ENCODE measurements at regions of chr15 and their contacts with region 1.

Region 1: DNA sequence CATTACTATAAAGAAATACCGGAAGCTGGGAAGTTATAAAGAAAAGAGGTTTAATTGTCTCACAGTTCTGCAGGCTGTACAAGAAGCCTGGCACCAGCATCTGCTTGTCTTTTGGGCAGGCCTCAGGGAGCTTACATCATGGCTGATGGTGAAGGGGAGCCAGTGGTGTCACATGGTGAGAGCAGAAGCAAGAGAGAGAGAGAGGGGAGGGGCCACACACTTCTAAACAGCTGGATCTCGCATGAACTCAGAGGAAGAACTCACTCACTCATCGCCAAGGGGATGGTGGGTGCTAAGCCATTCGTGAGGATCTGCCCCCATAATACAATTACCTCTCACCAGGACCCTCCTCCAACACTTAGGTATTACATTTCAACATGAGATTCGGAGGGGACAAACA is 51.8 kb upstream of the ANKRD34C start:
- DNase-seq: no peak
- ATAC-seq: no peak
- H3K4me3 ChIP-seq: no peak overlapping the region
- H3K27ac ChIP-seq: no peak overlapping the region
- H3K4me1 ChIP-seq: peaks cover 0 to 10% (median 0%) of the 10 kb centered on the region in 12 donors
- H3K27me3 ChIP-seq: no peaks in the 10 kb centered on the region
- CTCF ChIP-seq: no peak
- POLR2A ChIP-seq: no peak

Region 2: GRCh38 chr15:79184465-79184892 is 46.3 kb before region 1 on chr15:
- intact Hi-C with region 1: no loop called
- DNase-seq: peak; percentile 57 to 81 (median 70)
- ATAC-seq: peak in 3 of 4 donors; percentile 42 to 65 (median 50)
- H3K4me3 ChIP-seq: no peak overlapping the region
- H3K27ac ChIP-seq: no peak overlapping the region
- H3K4me1 ChIP-seq: no peaks in the 10 kb centered on the region
- H3K27me3 ChIP-seq: no peaks in the 10 kb centered on the region
- CTCF ChIP-seq: peak; percentile 89 to 99 (median 96)
- POLR2A ChIP-seq: no peak

Region 3: DNA sequence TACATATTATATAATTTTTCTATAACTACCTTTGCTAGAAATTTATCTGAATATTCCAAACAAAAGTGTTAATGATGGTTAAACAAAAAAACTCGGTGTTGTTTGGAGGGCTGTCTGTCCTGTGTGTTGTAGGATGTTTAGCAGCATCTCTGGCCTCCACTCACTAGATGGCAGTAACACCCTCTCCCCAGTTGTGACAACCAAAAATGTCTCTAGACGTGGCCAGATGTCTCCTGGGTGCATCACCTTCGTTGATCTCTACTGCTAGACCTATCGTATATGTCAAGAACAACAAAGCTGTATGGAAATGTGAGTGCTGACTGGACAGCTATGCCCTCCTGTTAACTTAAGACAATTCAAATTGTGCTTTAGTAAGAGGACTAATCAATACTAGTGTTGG is 65.8 kb after region 1 on chr15:
- intact Hi-C with region 1: loop called in 1 of 10 experiments (anchors 10 kb)
- DNase-seq: no peak
- ATAC-seq: no peak
- H3K4me3 ChIP-seq: no peak overlapping the region
- H3K27ac ChIP-seq: no peak overlapping the region
- H3K4me1 ChIP-seq: no peaks in the 10 kb centered on the region
- H3K27me3 ChIP-seq: peaks cover 0 to 11% (median 0%) of the 10 kb centered on the region in 9 donors
- CTCF ChIP-seq: no peak
- POLR2A ChIP-seq: no peak